HAP-1 (cell line): ENCODE measurements at regions of chr12 and their contacts with region 1.

Region 1: GRCh38 chr12:122123051-122123760 is 44.6 kb downstream of the MLXIP start:
- DNase-seq: peak; percentile 51 to 87
- H3K4me3 ChIP-seq: no peak overlapping the region
- H3K4me1 ChIP-seq: peaks cover 3% of the 10 kb centered on the region; the same call in 1 of the 2 replicates
- H3K27me3 ChIP-seq: no peaks in the 10 kb centered on the region

Region 2: DNA sequence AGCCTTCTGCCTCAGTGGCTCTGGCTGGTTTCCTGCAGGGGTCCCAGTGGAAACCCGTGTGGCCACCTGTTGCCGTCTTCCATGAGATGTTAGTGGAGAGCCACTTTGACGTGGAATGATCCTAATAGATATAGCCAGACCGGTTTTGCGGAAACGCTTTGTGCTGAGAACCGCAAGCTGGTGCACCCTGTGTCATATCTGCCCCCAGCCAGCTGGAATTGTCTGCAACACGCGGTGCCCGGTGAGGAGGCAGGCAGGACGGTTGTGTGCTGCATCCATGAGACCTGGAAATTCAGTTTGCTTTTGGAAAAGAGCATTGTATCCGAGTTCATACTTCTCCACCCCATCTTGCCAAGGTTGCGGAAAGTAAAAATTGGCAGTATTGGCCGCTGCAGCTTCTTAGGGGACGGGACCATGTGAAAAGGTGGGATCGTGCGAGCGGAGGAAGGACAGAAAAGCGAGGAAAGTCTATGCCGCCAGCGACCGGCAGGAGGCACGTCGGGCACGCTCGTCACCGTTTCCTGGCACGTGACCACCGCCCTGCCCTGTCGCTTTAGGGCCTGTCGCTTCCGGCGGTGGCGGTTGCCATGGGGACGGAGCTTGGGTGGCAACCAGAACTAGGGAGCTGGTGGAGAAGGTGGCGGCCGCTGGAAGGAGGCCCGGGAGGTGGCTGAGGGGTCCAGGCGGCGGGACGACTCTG is 205.1 kb before region 1 on chr12 and contains the start of gene CFAP251:
- in situ Hi-C with region 1: loop called (anchors 10 kb)
- DNase-seq: no peak
- H3K4me3 ChIP-seq: no peak within 1 kb of the TSS
- H3K4me1 ChIP-seq: no peaks in the 10 kb centered on the region
- H3K27me3 ChIP-seq: no peaks in the 10 kb centered on the region